Posterior cingulate gyrus (tissue), 11 donors: ENCODE measurements at regions of chr9 and their contacts with region 1.

Region 1: DNA sequence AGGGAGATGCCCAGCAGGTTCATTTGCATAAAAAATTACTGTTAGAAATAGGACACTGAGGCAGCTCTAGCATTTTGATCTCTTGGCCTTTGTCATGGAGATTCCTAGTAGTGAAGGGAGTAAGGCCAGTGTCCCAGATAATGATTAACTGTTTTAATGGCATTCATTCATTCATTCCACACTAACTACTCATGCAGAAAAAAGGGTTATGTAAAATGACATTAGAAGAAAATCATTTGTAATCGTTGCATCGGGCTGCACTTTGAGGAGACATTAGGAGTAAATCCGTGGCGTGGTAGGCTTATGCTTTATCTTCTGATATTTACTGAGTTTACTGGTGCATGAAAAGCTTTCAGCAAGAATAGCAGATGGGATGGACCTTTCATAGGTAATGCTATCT is 82.6 kb upstream of the GRHPR start:
- DNase-seq: no peak

Region 2: DNA sequence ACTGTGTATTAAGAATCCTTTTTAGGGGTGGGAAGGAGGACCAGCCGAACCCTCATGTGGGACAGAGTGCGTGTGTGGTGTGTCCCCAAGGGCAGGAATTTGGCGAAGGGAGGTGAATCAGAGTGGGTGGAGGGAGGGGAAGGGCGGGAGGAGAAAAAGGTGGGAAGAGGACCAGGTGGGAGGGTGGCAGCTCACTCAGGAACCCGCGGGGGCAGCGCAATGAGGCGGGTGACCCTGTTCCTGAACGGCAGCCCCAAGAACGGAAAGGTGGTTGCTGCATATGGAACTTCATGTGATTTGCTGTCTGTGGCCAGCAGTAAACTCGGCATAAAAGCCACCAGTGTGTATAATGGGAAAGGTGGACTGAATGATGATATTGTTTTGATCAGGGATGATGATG is 137.0 kb after region 1 on chr9:
- intact Hi-C with region 1: loop called (anchors 5 kb)
- DNase-seq: no peak